ENCODE measurements at regions of chr12 and their contacts with region 1.

Region 1: GRCh38 chr12:64256166-64256800 is 34.2 kb upstream of the KICS2 start:
- DNase-seq: no peak
- H3K4me3 Mint-ChIP-seq: no peak overlapping the region
- H3K27ac Mint-ChIP-seq: no peak overlapping the region
- H3K4me1 Mint-ChIP-seq: no peaks in the 10 kb centered on the region
- H3K27me3 Mint-ChIP-seq: no peaks in the 10 kb centered on the region

Region 2: DNA sequence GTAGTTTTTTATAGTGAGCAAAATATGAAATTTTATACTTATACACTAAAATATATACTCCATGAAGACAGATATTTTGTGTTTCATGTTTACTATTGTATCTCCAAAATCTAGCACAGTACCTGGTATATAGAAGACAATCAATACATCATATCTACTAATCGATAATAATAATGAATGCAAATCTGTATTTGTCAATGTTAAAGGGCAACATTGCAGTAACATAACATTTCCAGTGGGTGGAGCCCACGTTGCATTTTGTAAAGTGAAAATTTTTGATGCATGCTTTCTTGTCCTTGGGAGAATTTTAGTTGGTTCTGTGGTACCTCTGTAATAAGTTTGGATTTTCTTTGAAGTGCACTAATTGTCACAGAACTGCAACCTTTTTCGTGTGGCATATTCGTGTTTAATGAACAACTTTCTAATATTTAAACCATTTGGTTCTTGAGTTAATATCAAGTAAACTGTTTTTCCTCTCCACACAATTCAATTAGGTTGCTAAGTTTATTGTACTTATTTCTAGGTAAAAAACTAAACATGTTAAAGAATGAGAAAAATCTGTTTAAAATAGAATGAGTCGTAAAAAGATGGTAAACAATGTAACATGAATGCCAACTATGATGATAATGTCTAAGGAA is 1152.7 kb before region 1 on chr12:
- CTCF ChIA-PET with region 1: interaction called, 3 read pairs
- POLR2A ChIA-PET with region 1: no interaction called
- intact Hi-C with region 1: loop called (anchors 5 kb)
- DNase-seq: no peak
- H3K4me3 Mint-ChIP-seq: no peak overlapping the region
- H3K27ac Mint-ChIP-seq: no peak overlapping the region
- H3K4me1 Mint-ChIP-seq: no peaks in the 10 kb centered on the region
- H3K27me3 Mint-ChIP-seq: no peaks in the 10 kb centered on the region

Region 3: DNA sequence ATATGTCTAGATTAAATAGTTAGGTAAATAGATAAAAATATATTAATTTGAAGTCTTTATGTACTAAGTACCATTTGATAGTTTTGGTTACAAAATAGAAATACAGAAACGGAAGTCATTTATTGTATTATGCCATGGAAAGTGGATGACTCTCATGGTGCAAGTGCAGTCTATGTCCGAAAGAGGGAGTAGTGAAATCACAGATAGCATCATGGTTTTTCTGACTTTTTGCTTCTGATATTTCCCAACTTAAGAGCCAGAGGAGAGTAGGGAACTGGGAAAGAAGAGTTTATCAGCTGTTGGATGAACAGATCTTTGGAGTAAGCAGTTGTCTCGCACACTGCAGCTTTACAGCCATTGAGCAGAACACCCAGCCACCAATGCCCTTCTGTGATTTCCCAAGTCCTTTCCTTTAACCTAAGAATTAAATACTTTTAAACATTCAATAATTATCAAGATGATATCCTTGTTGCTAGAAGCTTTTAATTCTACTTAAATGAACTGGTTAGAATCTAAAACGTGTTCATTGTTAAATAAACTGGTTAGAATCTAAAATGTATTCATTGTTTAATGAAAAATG is 430.2 kb before region 1 on chr12:
- CTCF ChIA-PET with region 1: interaction called, 16 read pairs
- POLR2A ChIA-PET with region 1: no interaction called
- intact Hi-C with region 1: no loop called
- DNase-seq: no peak
- H3K4me3 Mint-ChIP-seq: no peak overlapping the region
- H3K27ac Mint-ChIP-seq: no peak overlapping the region
- H3K4me1 Mint-ChIP-seq: peaks cover 6% of the 10 kb centered on the region
- H3K27me3 Mint-ChIP-seq: peaks cover 13% of the 10 kb centered on the region

Region 4: GRCh38 chr12:64318605-64319004 is 62.3 kb after region 1 on chr12:
- CTCF ChIA-PET with region 1: no interaction called
- POLR2A ChIA-PET with region 1: no interaction called
- intact Hi-C with region 1: no loop called
- DNase-seq: no peak
- H3K4me3 Mint-ChIP-seq: no peak overlapping the region
- H3K27ac Mint-ChIP-seq: no peak overlapping the region
- H3K4me1 Mint-ChIP-seq: peaks cover 3% of the 10 kb centered on the region
- H3K27me3 Mint-ChIP-seq: peaks cover 1% of the 10 kb centered on the region

Region 5: GRCh38 chr12:64430886-64431285 is 174.6 kb after region 1 on chr12:
- CTCF ChIA-PET with region 1: no interaction called
- POLR2A ChIA-PET with region 1: no interaction called
- intact Hi-C with region 1: no loop called
- DNase-seq: no peak
- H3K4me3 Mint-ChIP-seq: no peak overlapping the region
- H3K27ac Mint-ChIP-seq: no peak overlapping the region
- H3K4me1 Mint-ChIP-seq: no peaks in the 10 kb centered on the region
- H3K27me3 Mint-ChIP-seq: no peaks in the 10 kb centered on the region

Measured in activated CD4-positive, alpha-beta memory T cell treated with anti-CD3 and anti-CD28 coated beads for 36 hours (primary cell).